Adrenal gland (tissue), 19 donors: ENCODE measurements at regions of chr15 and their contacts with region 1.

Region 1: DNA sequence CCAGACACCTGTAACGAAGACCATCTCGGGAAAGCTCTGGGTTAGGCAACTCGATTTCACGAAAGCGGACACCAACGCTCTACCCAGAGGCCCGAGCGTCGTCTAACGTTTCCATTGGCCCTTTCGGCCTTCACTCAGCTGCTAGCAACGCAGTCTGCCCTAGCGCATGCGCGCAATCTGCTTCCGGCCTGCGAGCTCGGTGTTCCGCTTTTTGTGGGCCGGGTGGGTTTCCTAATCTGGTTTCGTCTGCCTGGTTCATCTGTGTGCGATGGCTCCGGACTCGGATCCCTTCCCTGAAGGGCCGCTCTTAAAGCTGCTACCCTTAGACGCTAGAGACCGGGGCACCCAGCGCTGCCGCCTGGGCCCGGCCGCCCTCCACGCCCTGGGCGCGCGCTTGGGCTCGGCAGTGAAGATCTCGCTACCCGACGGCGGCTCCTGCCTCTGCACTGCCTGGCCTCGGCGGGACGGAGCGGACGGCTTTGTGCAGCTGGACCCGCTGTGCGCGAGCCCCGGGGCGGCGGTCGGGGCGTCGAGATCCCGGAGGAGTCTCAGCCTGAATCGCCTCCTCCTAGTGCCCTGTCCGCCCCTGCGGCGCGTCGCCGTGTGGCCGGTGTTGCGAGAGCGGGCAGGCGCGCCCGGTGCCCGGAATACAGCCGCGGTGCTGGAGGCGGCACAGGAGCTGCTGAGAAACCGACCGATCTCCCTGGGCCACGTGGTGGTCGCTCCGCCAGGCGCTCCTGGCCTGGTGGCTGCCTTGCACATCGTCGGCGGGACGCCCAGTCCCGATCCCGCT is 24.0 kb upstream of the GATM start:
- DNase-seq: peak; percentile 94 to 99 (median 97)
- H3K4me3 ChIP-seq: peak overlapping the region; percentile 30 to 98 (median 78)
- H3K27ac ChIP-seq: peak overlapping the region; percentile 69 to 94 (median 89)
- H3K4me1 ChIP-seq: peaks cover 12 to 30% of the 10 kb centered on the region in 2 donors
- H3K27me3 ChIP-seq: no peaks in the 10 kb centered on the region
- CTCF ChIP-seq: peak in 2 of 6 experiments; percentile 2 to 5
- POLR2A ChIP-seq: peak; percentile 45 to 65

Region 2: DNA sequence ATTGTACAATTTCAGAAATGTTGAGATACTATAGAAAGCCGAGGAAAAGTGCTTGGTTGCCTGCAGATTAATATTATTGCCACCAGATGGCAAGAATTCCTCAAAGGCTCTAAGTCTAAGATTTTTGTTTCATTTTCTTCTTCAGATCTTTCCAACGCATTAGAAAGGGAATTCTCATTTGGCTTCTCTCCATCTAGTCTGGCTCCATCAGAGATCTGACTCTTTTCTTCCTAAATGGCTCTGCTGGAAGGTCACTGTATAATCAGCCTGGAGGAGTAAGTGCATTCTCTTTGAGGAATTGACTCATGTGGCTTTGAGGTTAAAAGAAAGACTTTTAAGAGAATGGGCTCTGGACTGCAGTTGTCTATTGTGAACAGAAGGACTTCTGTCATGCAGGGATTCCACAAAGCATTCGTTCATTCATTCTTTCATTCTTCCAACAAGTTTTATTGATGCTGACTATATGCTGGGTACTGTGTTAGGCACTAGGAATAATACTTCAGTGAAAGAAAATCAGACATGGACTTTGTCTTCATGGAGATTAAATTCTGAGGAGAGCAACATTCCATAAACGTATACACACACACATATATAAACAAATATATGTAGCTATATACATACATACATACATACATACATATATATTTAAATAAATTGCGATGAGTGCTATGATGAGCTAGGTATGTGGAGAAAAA is 95.0 kb before region 1 on chr15:
- intact Hi-C with region 1: loop called (anchors 10 kb)
- DNase-seq: peak in 3 of 7 donors; percentile 18 to 36 (median 32)
- H3K4me3 ChIP-seq: peak overlapping the region in 1 of 4 donors; percentile 30
- H3K27ac ChIP-seq: peak overlapping the region in 1 of 5 donors; percentile 59
- H3K4me1 ChIP-seq: peaks cover 5 to 6% of the 10 kb centered on the region in 2 donors
- H3K27me3 ChIP-seq: no peaks in the 10 kb centered on the region
- CTCF ChIP-seq: peak; percentile 45 to 79 (median 68)
- POLR2A ChIP-seq: no peak

Region 3: DNA sequence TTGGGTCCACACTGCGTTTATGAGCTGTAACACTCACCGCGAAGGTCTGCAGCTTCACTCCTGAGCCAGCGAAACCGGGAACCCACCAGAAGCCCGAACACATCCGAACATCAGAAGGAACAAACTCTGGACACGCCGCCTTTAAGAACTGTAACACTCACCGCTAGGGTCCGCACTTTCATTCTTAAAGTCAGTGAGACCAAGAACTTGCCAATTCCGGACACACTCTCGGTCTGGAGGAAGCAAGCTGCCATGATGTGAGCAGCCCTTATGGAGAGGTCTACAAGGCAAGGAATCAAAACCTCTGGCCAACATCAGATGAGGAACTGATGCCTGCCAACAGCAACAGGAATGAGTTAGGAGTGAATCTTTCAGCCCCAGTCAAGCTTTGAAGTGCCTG is 87.4 kb before region 1 on chr15:
- intact Hi-C with region 1: loop called in 1 of 2 experiments (anchors 10 kb)
- DNase-seq: peak in 6 of 7 donors; percentile 26 to 68 (median 50)
- H3K4me3 ChIP-seq: no peak overlapping the region
- H3K27ac ChIP-seq: no peak overlapping the region
- H3K4me1 ChIP-seq: no peaks in the 10 kb centered on the region
- H3K27me3 ChIP-seq: no peaks in the 10 kb centered on the region
- CTCF ChIP-seq: peak in 4 of 6 experiments; percentile 28 to 32 (median 30)
- POLR2A ChIP-seq: no peak